ENCODE measurements at regions of chr13 and their contacts with region 1.

Region 1: DNA sequence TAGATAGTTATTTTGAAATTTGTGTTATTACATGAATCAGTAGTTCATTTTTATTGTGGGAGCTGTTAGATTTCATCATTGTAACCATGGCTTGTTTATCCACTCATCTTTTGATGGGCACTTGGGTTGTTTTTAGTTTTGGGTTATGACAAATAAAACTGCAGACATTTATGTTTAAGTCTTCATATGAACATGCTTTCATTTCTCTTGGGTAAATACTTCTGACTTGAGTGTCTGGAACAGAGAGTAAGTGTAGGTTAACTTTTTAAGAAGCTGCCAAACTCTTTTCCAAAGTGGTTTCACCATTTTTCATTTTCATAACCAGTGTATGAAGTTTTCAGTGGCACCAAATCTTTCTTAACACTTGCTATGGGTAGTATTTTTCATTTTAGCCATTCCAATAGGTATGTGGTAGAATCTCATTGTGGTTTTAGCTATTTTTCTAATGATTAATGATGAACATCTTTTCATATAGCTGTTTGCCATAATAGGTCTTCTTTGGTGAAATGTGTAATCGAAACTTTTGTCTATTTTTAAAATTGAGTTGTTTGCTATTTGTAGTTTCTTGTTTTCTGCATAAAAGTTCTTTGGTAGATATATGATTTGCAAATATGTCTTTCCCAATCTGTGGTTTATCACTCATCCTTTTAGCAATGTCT is 17.9 kb downstream of the SLAIN1 start:
- DNase-seq: no peak
- ATAC-seq: no peak
- H3K4me3 ChIP-seq: no peak overlapping the region
- H3K4me3 Mint-ChIP-seq: peak overlapping the region in 3 of 10 donors; percentile 16 to 32 (median 27)
- H3K27ac ChIP-seq: no peak overlapping the region
- H3K27ac Mint-ChIP-seq: peak overlapping the region in 6 of 9 donors; percentile 15 to 56 (median 31)
- H3K4me1 ChIP-seq: no peaks in the 10 kb centered on the region
- H3K4me1 Mint-ChIP-seq: peaks cover 10 to 93% (median 82%) of the 10 kb centered on the region in 7 donors
- H3K27me3 ChIP-seq: no peaks in the 10 kb centered on the region
- H3K27me3 Mint-ChIP-seq: no peaks in the 10 kb centered on the region

Region 2: GRCh38 chr13:76245920-76246319 is 1469.4 kb before region 1 on chr13:
- CTCF ChIA-PET with region 1: no interaction called
- POLR2A ChIA-PET with region 1: no interaction called
- intact Hi-C with region 1: no loop called
- DNase-seq: no peak
- ATAC-seq: no peak
- H3K4me3 ChIP-seq: no peak overlapping the region
- H3K4me3 Mint-ChIP-seq: no peak overlapping the region
- H3K27ac ChIP-seq: no peak overlapping the region
- H3K27ac Mint-ChIP-seq: no peak overlapping the region
- H3K4me1 ChIP-seq: no peaks in the 10 kb centered on the region
- H3K4me1 Mint-ChIP-seq: no peaks in the 10 kb centered on the region
- H3K27me3 ChIP-seq: no peaks in the 10 kb centered on the region
- H3K27me3 Mint-ChIP-seq: peaks cover 0 to 18% (median 0%) of the 10 kb centered on the region in 5 donors

Region 3: DNA sequence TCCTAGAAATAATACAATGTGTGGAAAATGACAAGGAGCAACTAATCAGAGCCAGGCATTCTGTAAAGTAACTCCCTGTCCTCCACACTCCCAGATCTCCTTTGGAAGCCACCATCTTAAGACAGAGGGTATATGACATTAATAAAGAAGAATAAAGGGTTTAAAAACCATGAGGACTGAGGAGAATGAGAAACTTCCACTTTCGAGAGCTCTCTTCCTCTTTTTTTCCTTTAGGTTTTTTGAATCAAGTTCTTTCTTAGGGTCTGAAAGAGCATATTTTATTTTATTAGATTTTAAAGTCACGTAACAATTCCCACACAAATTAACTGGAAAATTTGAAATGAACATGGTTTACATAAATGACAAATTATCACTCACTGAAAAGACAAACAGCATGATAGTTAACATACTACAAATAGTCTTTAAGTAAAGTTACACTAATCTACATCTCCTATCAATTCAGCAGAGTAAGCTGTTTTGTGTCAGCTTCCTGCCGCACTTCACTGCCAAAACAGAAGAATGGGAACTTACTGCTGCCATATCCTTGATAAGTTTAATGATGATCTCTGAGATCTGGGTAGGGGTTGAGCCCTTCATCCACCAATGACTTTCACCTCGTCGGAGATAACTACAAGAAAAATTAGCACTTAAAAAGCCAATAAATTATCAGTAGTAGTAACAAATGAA is 649.8 kb before region 1 on chr13:
- CTCF ChIA-PET with region 1: no interaction called
- POLR2A ChIA-PET with region 1: no interaction called
- intact Hi-C with region 1: no loop called
- DNase-seq: no peak
- ATAC-seq: no peak
- H3K4me3 ChIP-seq: no peak overlapping the region
- H3K4me3 Mint-ChIP-seq: no peak overlapping the region
- H3K27ac ChIP-seq: no peak overlapping the region
- H3K27ac Mint-ChIP-seq: peak overlapping the region in 5 of 9 donors; percentile 23 to 80 (median 74)
- H3K4me1 ChIP-seq: no peaks in the 10 kb centered on the region
- H3K4me1 Mint-ChIP-seq: peaks cover 0 to 2% (median 0%) of the 10 kb centered on the region in 7 donors
- H3K27me3 ChIP-seq: no peaks in the 10 kb centered on the region
- H3K27me3 Mint-ChIP-seq: no peaks in the 10 kb centered on the region

Region 4: DNA sequence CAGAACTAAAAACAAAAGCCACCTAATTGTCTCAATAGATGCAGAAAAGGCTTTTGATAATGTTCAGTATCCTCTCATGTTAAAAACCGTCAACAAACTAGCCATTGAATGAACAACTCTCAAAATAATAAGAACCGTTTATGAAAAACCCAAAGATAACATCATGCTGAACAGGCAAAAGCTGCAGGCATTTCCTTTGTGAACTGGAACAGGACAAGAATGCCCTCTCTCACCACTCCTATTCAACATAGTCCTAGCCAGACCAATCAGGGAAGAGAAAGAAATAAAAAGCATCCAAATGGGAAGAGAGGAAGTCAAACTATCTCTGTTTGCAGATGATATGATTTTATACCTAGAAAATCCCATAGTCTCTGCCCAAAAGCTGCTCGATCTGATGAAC is 382.9 kb after region 1 on chr13:
- CTCF ChIA-PET with region 1: no interaction called
- POLR2A ChIA-PET with region 1: interaction called, 10 read pairs
- intact Hi-C with region 1: no loop called
- DNase-seq: no peak
- ATAC-seq: no peak
- H3K4me3 ChIP-seq: no peak overlapping the region
- H3K4me3 Mint-ChIP-seq: no peak overlapping the region
- H3K27ac ChIP-seq: no peak overlapping the region
- H3K27ac Mint-ChIP-seq: no peak overlapping the region
- H3K4me1 ChIP-seq: no peaks in the 10 kb centered on the region
- H3K4me1 Mint-ChIP-seq: no peaks in the 10 kb centered on the region
- H3K27me3 ChIP-seq: no peaks in the 10 kb centered on the region
- H3K27me3 Mint-ChIP-seq: peaks cover 0 to 16% (median 6%) of the 10 kb centered on the region in 5 donors